Activated CD4-positive, alpha-beta T cell treated with anti-CD3 and anti-CD28 coated beads, Interleukin-2, amount 10 ng/mL, durations not matched to agents 7 days and 5 days (primary cell): ENCODE measurements at regions of chr7 and their contacts with region 1.

Region 1: GRCh38 chr7:2709553-2710285 is 21.7 kb downstream of the AMZ1 start:
- DNase-seq: peak; percentile 84
- H3K4me3 Mint-ChIP-seq: peak overlapping the region; percentile 43
- H3K27ac Mint-ChIP-seq: peak overlapping the region; percentile 54
- H3K4me1 Mint-ChIP-seq: peaks cover 45% of the 10 kb centered on the region
- H3K27me3 Mint-ChIP-seq: peaks cover 7% of the 10 kb centered on the region

Region 2: DNA sequence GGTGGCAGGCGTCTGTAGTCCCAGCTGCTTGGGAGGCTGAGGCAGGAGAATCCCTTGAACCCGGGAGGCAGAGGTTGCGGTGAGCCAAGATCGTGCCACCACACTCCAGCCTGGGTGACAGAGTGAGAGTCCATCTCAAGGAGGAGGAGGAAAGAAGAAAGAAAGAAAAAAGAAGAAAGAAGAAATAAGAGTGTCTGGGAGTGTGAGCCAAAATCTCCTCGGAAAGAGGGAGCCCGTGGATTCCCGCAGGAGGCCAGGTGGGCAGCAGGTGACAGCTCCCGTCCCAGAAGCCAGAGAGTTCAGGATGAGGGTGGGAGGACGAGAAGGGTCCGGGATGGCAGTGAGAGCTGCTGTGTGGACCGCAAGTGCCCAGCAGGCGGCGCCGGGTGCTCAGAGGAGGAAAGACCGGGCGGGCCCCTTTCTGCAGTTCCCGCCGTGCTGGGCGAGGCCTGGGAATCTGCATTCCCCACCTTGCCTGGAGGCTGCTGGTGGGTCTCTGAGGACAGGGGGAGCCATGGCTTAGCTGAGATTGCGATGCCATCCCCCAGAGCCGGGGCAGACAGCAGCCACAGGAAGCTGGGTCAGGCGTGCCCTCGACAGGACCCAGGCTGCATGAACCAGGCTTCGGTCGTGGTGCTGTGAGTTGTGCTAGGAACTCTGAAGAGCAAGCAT is 38.9 kb before region 1 on chr7:
- CTCF ChIA-PET with region 1: interaction called, 53 read pairs
- POLR2A ChIA-PET with region 1: interaction called, 5 read pairs
- DNase-seq: peak; percentile 68
- H3K4me3 Mint-ChIP-seq: no peak overlapping the region
- H3K27ac Mint-ChIP-seq: peak overlapping the region; percentile 54
- H3K4me1 Mint-ChIP-seq: peaks cover 8% of the 10 kb centered on the region
- H3K27me3 Mint-ChIP-seq: peaks cover 45% of the 10 kb centered on the region

Region 3: GRCh38 chr7:2680792-2681490 is 28.8 kb before region 1 on chr7:
- CTCF ChIA-PET with region 1: interaction called, 19 read pairs
- POLR2A ChIA-PET with region 1: no interaction called
- DNase-seq: peak; percentile 56
- H3K4me3 Mint-ChIP-seq: no peak overlapping the region
- H3K27ac Mint-ChIP-seq: no peak overlapping the region
- H3K4me1 Mint-ChIP-seq: no peaks in the 10 kb centered on the region
- H3K27me3 Mint-ChIP-seq: peaks cover 5% of the 10 kb centered on the region

Region 4: GRCh38 chr7:2688409-2689331 is 21.0 kb before region 1 on chr7:
- CTCF ChIA-PET with region 1: interaction called, 18 read pairs
- POLR2A ChIA-PET with region 1: no interaction called
- DNase-seq: no peak
- H3K4me3 Mint-ChIP-seq: no peak overlapping the region
- H3K27ac Mint-ChIP-seq: no peak overlapping the region
- H3K4me1 Mint-ChIP-seq: peaks cover 18% of the 10 kb centered on the region
- H3K27me3 Mint-ChIP-seq: peaks cover 44% of the 10 kb centered on the region

Region 5: DNA sequence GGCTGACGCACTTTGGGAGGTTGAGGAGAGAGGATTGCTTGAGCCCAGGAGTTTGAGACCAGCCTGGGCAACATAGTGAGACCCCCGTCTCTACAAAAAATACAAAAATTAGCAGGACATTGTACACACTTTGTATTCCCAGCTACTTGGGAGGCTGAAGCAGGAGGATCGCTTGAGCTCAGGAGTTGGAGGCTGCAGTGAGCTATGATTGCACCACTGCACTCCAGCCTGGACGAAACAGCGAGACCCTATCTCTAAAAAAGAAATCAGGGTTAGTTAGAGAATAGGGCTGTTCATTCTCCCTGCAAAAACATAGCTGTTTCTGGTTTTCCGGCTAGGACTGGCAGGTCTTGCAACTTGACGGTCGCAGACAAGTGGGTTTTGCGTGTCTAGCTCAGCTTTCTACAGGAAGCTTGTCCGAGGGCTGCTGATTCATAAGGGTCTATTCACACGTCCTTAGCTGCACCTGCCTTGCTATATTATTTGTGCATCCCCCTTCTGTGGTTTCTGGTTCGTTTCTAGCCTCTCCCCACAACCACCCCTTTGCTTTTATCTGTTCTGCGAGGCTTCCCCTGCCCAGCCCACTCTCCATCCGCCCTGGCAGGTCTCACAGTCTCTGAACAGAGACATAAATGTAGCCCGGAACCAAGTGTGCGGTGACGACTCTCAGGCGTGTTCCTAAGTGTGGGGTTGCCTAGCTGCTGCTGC is 11.0 kb before region 1 on chr7:
- CTCF ChIA-PET with region 1: interaction called, 84 read pairs
- POLR2A ChIA-PET with region 1: interaction called, 8 read pairs
- DNase-seq: peak; percentile 86
- H3K4me3 Mint-ChIP-seq: peak overlapping the region; percentile 56
- H3K27ac Mint-ChIP-seq: peak overlapping the region; percentile 76
- H3K4me1 Mint-ChIP-seq: peaks cover 38% of the 10 kb centered on the region
- H3K27me3 Mint-ChIP-seq: peaks cover 7% of the 10 kb centered on the region

Region 6: DNA sequence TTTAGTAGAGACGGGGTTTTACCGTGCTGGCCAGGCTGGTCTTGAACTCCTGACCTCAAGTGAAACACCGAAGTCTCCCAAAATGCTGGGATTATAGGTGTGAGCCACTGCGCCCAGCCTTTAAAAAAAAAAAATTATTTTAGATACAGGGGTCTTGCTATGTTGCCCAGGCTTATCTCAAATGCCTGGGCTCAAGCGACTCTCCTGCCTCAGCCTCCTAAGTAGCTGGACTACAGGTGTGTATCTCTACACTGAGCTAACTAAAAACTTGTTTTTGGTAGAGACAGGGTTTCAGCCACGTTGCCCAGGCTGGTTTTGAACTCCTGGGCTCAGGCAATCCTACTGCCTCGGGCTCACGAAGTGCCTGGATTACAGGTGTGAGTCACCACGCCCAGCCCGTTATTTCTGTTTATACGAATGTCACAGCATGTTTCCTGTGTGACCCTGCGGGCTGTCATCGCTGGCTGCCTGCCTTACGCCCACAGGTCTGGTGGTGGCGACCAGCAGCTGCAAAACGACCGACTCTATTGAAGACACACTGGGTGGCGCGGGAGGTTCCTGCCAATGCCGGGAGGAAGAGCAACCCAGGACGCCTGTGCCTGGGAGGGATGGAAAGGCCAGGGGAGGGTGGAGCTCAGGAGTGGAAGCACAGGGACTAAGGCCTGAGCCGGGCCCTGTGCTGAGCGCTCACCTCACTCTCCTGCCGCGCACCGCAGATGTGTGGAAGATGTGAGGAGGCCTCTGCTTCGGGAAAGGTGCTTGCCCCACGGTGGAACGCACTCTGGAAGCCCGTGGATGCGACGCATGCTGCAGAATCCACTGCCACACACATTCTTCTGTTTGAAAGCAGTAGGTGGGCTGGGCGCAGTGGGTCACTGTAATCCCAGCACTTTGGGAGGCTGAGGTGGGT is 11.1 kb after region 1 on chr7:
- CTCF ChIA-PET with region 1: interaction called, 36 read pairs
- POLR2A ChIA-PET with region 1: no interaction called
- DNase-seq: peak; percentile 68
- H3K4me3 Mint-ChIP-seq: no peak overlapping the region
- H3K27ac Mint-ChIP-seq: peak overlapping the region; percentile 77
- H3K4me1 Mint-ChIP-seq: peaks cover 50% of the 10 kb centered on the region
- H3K27me3 Mint-ChIP-seq: no peaks in the 10 kb centered on the region

Region 7: GRCh38 chr7:2855386-2855785 is 145.7 kb after region 1 on chr7:
- CTCF ChIA-PET with region 1: interaction called, 10 read pairs
- POLR2A ChIA-PET with region 1: interaction called, 3 read pairs
- DNase-seq: no peak
- H3K4me3 Mint-ChIP-seq: no peak overlapping the region
- H3K27ac Mint-ChIP-seq: no peak overlapping the region
- H3K4me1 Mint-ChIP-seq: no peaks in the 10 kb centered on the region
- H3K27me3 Mint-ChIP-seq: no peaks in the 10 kb centered on the region